Naive thymus-derived CD4-positive, alpha-beta T cell (primary cell): ENCODE measurements at regions of chr11 and their contacts with region 1.

Region 1: DNA sequence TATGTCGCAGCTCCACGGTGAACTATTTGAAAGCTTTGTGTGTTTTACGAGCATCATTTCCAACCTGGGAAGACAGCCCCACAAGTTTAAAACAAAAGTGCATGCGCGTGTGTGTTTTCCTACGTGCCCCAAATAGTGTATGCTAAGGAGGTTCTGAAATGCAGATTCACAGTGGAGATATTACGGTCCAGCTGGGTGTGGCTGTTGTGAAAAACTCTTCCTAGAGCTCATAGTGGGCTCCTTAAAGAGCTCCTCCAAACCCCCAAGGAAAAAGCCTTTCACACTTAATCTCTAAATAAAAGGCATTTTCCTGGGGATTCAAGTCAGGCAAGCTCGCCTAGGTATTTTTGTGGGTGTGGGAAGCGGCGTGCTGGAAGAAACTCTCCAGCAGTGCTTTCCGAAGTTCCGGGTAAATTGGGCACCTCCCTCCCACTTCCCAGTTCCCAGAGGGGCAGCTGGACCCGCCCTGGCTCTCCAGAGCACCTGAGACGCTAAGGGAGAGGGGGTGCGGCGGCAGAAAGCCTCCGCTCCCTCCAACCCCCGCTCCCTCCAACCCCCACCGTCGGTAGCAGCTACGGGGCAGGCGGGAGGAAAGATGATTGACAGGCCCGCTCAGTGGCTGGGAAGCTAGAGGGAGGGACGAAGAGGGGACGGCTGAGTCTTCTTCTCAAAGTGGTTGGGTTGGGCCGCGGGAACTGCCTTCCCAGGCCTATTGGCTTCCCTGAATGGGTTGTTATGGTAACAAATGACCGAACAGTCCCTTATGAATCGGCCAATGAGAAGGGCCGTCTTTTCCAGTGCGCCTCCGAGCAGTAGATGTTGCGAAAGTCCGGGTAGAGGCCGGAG is 558 bp upstream of the PCF11 start:
- DNase-seq: peak in 7 of 9 donors; percentile 89 to 99 (median 98)
- ATAC-seq: peak; percentile 92
- H3K4me3 ChIP-seq: peak overlapping the region; percentile 90
- H3K4me3 Mint-ChIP-seq: peak overlapping the region; percentile 96 to 100 (median 99)
- H3K27ac ChIP-seq: peak overlapping the region; percentile 98
- H3K27ac Mint-ChIP-seq: peak overlapping the region; percentile 98 to 100 (median 100)
- H3K4me1 ChIP-seq: peaks cover under 1 to 18% of the 10 kb centered on the region in 2 donors
- H3K4me1 Mint-ChIP-seq: peaks cover 11 to 33% (median 23%) of the 10 kb centered on the region in 7 donors
- H3K27me3 ChIP-seq: no peaks in the 10 kb centered on the region
- H3K27me3 Mint-ChIP-seq: peaks cover 0 to 3% (median 0%) of the 10 kb centered on the region in 5 donors

Region 2: GRCh38 chr11:82750643-82751139 is 405.7 kb before region 1 on chr11:
- CTCF ChIA-PET with region 1: no interaction called
- POLR2A ChIA-PET with region 1: no interaction called
- intact Hi-C with region 1: loop called in 1 of 2 experiments (anchors 10 kb)
- DNase-seq: peak in 7 of 9 donors; percentile 41 to 66 (median 62)
- ATAC-seq: peak; percentile 84
- H3K4me3 ChIP-seq: peak overlapping the region; percentile 21
- H3K4me3 Mint-ChIP-seq: peak overlapping the region; percentile 71 to 87 (median 82)
- H3K27ac ChIP-seq: peak overlapping the region; percentile 11
- H3K27ac Mint-ChIP-seq: peak overlapping the region; percentile 22 to 91 (median 60)
- H3K4me1 ChIP-seq: peaks cover 2 to 27% of the 10 kb centered on the region in 2 donors
- H3K4me1 Mint-ChIP-seq: peaks cover 15 to 47% (median 38%) of the 10 kb centered on the region in 7 donors
- H3K27me3 ChIP-seq: no peaks in the 10 kb centered on the region
- H3K27me3 Mint-ChIP-seq: peaks cover 0 to 38% (median 0%) of the 10 kb centered on the region in 5 donors

Region 3: GRCh38 chr11:82927254-82927880 is 229.0 kb before region 1 on chr11:
- CTCF ChIA-PET with region 1: no interaction called
- POLR2A ChIA-PET with region 1: interaction called, 4 read pairs
- intact Hi-C with region 1: loop called (anchors 1 to 5 kb)
- DNase-seq: peak in 7 of 9 donors; percentile 51 to 77 (median 67)
- ATAC-seq: peak; percentile 89
- H3K4me3 ChIP-seq: no peak overlapping the region
- H3K4me3 Mint-ChIP-seq: peak overlapping the region in 2 of 10 donors; percentile 10 to 63
- H3K27ac ChIP-seq: no peak overlapping the region
- H3K27ac Mint-ChIP-seq: peak overlapping the region in 8 of 9 donors; percentile 26 to 76 (median 52)
- H3K4me1 ChIP-seq: peaks cover 0 to 23% of the 10 kb centered on the region in 2 donors
- H3K4me1 Mint-ChIP-seq: peaks cover 10 to 55% (median 45%) of the 10 kb centered on the region in 7 donors
- H3K27me3 ChIP-seq: no peaks in the 10 kb centered on the region
- H3K27me3 Mint-ChIP-seq: no peaks in the 10 kb centered on the region

Region 4: GRCh38 chr11:83063073-83063754 is 93.2 kb before region 1 on chr11:
- CTCF ChIA-PET with region 1: interaction called, 3 read pairs
- POLR2A ChIA-PET with region 1: interaction called, 14 read pairs
- intact Hi-C with region 1: loop called in 1 of 2 experiments (anchors 2 kb)
- DNase-seq: peak in 7 of 9 donors; percentile 19 to 60 (median 50)
- ATAC-seq: peak; percentile 78
- H3K4me3 ChIP-seq: peak overlapping the region; percentile 29
- H3K4me3 Mint-ChIP-seq: peak overlapping the region; percentile 72 to 92 (median 88)
- H3K27ac ChIP-seq: peak overlapping the region; percentile 71
- H3K27ac Mint-ChIP-seq: peak overlapping the region; percentile 90 to 99 (median 94)
- H3K4me1 ChIP-seq: peaks cover 0 to 25% of the 10 kb centered on the region in 2 donors
- H3K4me1 Mint-ChIP-seq: peaks cover 18 to 61% (median 55%) of the 10 kb centered on the region in 7 donors
- H3K27me3 ChIP-seq: no peaks in the 10 kb centered on the region
- H3K27me3 Mint-ChIP-seq: no peaks in the 10 kb centered on the region

Region 5: DNA sequence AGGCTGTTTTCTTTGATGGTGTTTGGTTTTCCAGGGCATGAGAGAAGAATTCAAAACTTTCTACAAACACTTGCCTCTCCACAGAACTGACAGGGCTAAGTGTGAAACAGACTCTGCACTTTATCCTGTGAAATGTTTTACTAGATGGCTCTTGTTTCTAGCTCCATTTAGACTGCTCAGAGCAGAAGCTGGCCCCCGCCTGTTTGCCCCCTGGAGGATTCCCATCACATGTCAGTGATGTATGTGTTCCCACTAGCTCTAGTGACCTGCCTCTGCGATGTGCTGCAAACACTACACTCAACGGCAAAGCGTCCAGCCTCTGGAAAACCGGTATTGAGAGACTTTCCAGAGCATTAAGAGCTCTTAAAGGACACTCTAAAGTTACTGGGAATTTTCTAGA is 40.8 kb before region 1 on chr11:
- CTCF ChIA-PET with region 1: interaction called, 3 read pairs
- POLR2A ChIA-PET with region 1: interaction called, 192 read pairs
- intact Hi-C with region 1: loop called (anchors 1 kb)
- DNase-seq: no peak
- ATAC-seq: no peak
- H3K4me3 ChIP-seq: peak overlapping the region; percentile 20
- H3K4me3 Mint-ChIP-seq: peak overlapping the region; percentile 41 to 86 (median 74)
- H3K27ac ChIP-seq: no peak overlapping the region
- H3K27ac Mint-ChIP-seq: peak overlapping the region in 7 of 9 donors; percentile 12 to 98 (median 68)
- H3K4me1 ChIP-seq: peaks cover 27 to 36% of the 10 kb centered on the region in 2 donors
- H3K4me1 Mint-ChIP-seq: peaks cover 9 to 62% (median 56%) of the 10 kb centered on the region in 7 donors
- H3K27me3 ChIP-seq: no peaks in the 10 kb centered on the region
- H3K27me3 Mint-ChIP-seq: no peaks in the 10 kb centered on the region

Region 6: GRCh38 chr11:83174008-83174407 is 17.6 kb after region 1 on chr11:
- CTCF ChIA-PET with region 1: no interaction called
- POLR2A ChIA-PET with region 1: interaction called, 62 read pairs
- intact Hi-C with region 1: loop called (anchors 1 to 2 kb)
- DNase-seq: no peak
- ATAC-seq: peak; percentile 37
- H3K4me3 ChIP-seq: no peak overlapping the region
- H3K4me3 Mint-ChIP-seq: peak overlapping the region in 9 of 10 donors; percentile 2 to 85 (median 55)
- H3K27ac ChIP-seq: no peak overlapping the region
- H3K27ac Mint-ChIP-seq: peak overlapping the region in 3 of 9 donors; percentile 33 to 76 (median 36)
- H3K4me1 ChIP-seq: peaks cover 39 to 51% of the 10 kb centered on the region in 2 donors
- H3K4me1 Mint-ChIP-seq: peaks cover 36 to 85% (median 72%) of the 10 kb centered on the region in 7 donors
- H3K27me3 ChIP-seq: no peaks in the 10 kb centered on the region
- H3K27me3 Mint-ChIP-seq: no peaks in the 10 kb centered on the region

Region 7: GRCh38 chr11:83193315-83194280 is 37.2 kb after region 1 on chr11 and contains the start of gene ANKRD42:
- CTCF ChIA-PET with region 1: no interaction called
- POLR2A ChIA-PET with region 1: interaction called, 50 read pairs
- intact Hi-C with region 1: loop called (anchors 1 kb)
- DNase-seq: peak; percentile 66 to 90 (median 87)
- ATAC-seq: peak; percentile 84
- H3K4me3 ChIP-seq: peak within 1 kb of the TSS; percentile 89
- H3K4me3 Mint-ChIP-seq: peak within 1 kb of the TSS; percentile 92 to 100 (median 98)
- H3K27ac ChIP-seq: peak within 1 kb of the TSS; percentile 99
- H3K27ac Mint-ChIP-seq: peak within 1 kb of the TSS; percentile 96 to 100 (median 99)
- H3K4me1 ChIP-seq: peaks cover 22 to 29% of the 10 kb centered on the region in 2 donors
- H3K4me1 Mint-ChIP-seq: peaks cover 33 to 61% (median 50%) of the 10 kb centered on the region in 7 donors
- H3K27me3 ChIP-seq: no peaks in the 10 kb centered on the region
- H3K27me3 Mint-ChIP-seq: no peaks in the 10 kb centered on the region
- total RNA-seq, gene ANKRD42: 3.1 to 10.9 (median 7.0) TPM

Region 8: DNA sequence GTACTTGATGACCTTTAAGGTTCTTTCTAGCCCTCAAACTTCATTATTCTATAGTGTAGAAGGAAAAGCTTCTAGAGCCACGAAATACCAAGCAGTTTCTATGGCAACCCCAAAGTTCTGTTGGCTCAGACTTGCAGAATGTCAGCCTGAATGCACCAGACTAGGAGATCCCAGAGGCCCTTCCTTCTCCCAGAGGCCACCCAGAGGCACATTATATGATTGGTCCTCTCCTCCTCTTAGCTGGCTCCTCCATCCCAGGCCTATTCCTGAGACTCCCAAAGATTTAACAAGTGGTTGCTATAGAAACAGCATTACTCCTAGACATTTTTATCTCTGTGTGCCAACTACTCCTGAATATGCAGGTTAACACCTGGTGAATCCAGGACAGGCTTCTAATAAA is 199.0 kb after region 1 on chr11:
- CTCF ChIA-PET with region 1: no interaction called
- POLR2A ChIA-PET with region 1: no interaction called
- intact Hi-C with region 1: no loop called
- DNase-seq: no peak
- ATAC-seq: no peak
- H3K4me3 ChIP-seq: no peak overlapping the region
- H3K4me3 Mint-ChIP-seq: no peak overlapping the region
- H3K27ac ChIP-seq: no peak overlapping the region
- H3K27ac Mint-ChIP-seq: no peak overlapping the region
- H3K4me1 ChIP-seq: no peaks in the 10 kb centered on the region
- H3K4me1 Mint-ChIP-seq: no peaks in the 10 kb centered on the region
- H3K27me3 ChIP-seq: no peaks in the 10 kb centered on the region
- H3K27me3 Mint-ChIP-seq: peaks cover 0 to 4% (median 0%) of the 10 kb centered on the region in 5 donors